ENCODE measurements at regions of chrX and their contacts with region 1.

Region 1: DNA sequence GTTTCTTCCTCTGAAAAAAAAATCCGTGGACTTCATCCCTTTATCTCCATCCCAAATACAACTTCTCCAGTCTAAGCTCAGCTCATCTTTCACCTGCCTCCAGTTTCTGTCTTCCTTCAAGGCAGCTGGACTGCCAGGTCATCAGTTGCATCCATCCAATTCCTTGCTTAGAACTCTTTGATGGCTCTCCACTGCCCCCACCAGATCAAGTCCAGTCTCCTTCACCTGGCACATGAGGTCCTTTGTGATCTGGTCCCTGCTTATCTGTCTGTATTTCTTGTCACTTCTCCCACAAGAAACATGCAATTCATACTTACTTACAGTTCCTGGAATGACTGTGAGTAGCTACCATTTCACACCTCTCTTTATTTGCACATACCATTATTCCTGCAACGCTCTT is 33.8 kb downstream of the OTUD6A start:
- DNase-seq: peak in 2 of 5 donors; percentile 3 to 10
- H3K4me3 ChIP-seq: no peak overlapping the region
- H3K27ac ChIP-seq: no peak overlapping the region
- H3K4me1 ChIP-seq: no peaks in the 10 kb centered on the region
- H3K27me3 ChIP-seq: no peaks in the 10 kb centered on the region
- CTCF ChIP-seq: no peak

Region 2: GRCh38 chrX:69493193-69493592 is 602.9 kb before region 1 on chrX:
- intact Hi-C with region 1: loop called (anchors 10 kb)
- DNase-seq: peak in 2 of 5 donors; percentile 21 to 32
- H3K4me3 ChIP-seq: no peak overlapping the region
- H3K27ac ChIP-seq: no peak overlapping the region
- H3K4me1 ChIP-seq: no peaks in the 10 kb centered on the region
- H3K27me3 ChIP-seq: no peaks in the 10 kb centered on the region
- CTCF ChIP-seq: peak; percentile 43

Region 3: GRCh38 chrX:70289793-70290776 is 194.0 kb after region 1 on chrX and contains the starts of genes KIF4A and PDZD11:
- intact Hi-C with region 1: no loop called
- DNase-seq: peak; percentile 88 to 94 (median 90)
- H3K4me3 ChIP-seq: peak within 1 kb of the TSS; percentile 79 to 84 (median 80)
- H3K27ac ChIP-seq: no peak within 1 kb of the TSS
- H3K4me1 ChIP-seq: peaks cover 0 to 6% (median 5%) of the 10 kb centered on the region in 3 donors
- H3K27me3 ChIP-seq: no peaks in the 10 kb centered on the region
- CTCF ChIP-seq: no peak
- total RNA-seq, gene KIF4A: 0.35 TPM
- total RNA-seq, gene PDZD11: 31.3 TPM

Region 4: GRCh38 chrX:71032516-71032915 is 936.5 kb after region 1 on chrX:
- intact Hi-C with region 1: no loop called
- DNase-seq: no peak
- H3K4me3 ChIP-seq: no peak overlapping the region
- H3K27ac ChIP-seq: no peak overlapping the region
- H3K4me1 ChIP-seq: no peaks in the 10 kb centered on the region
- H3K27me3 ChIP-seq: no peaks in the 10 kb centered on the region
- CTCF ChIP-seq: no peak

Measured in kidney (tissue), 22 donors.